Posterior cingulate gyrus (tissue), 11 donors: ENCODE measurements at regions of chr20 and their contacts with region 1.

Region 1: GRCh38 chr20:62616728-62617621 is 25.3 kb upstream of the SLCO4A1 start:
- DNase-seq: peak; percentile 44 to 97 (median 73)

Region 2: DNA sequence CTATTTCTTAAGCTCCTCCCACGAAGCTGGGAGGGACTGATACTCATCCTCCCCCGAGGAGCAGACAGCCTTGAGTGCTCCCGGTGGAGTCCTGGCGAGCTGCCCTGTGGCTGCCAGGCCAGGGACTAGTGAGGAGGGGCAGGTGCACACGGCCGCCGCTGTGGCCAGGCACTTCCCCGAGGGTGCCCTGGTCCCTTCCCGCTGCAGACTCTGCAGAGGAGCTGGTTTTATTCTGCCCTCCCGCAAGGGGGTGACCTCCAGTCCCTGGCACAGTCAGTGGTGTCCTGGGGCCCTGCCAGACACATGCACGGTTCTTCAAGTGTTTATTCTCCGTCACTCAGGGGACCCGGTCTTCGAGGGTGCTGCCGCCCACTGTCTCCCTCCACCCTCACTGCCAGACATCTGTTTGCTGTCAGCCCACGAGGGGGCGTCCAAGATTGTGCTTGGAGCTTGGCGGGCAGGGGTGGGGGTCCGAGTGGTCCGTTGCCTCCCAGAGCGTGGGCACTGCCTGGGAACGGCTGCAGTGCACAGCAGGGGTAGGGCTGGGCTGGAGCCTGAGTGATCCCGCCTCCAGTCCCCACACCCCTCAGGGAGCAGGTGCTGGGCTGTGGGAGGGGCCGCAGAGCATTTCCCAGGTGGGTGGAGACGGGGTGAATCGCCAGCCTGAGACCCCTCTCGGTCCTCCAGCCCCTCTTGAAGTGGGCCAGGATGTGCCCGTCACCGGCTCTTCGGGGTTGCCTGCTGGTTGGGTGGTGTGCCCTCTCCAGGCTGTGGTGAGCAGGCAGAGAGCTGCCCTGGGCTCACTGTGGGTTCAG is 206.8 kb before region 1 on chr20:
- intact Hi-C with region 1: loop called (anchors 5 kb)
- DNase-seq: peak in 1 of 10 donors; percentile 21

Region 3: GRCh38 chr20:62500237-62500864 is 116.6 kb before region 1 on chr20:
- intact Hi-C with region 1: loop called (anchors 2 kb)
- DNase-seq: peak in 8 of 10 donors; percentile 66 to 93 (median 76)